ENCODE measurements at regions of chr1 and their contacts with region 1.

Region 1: DNA sequence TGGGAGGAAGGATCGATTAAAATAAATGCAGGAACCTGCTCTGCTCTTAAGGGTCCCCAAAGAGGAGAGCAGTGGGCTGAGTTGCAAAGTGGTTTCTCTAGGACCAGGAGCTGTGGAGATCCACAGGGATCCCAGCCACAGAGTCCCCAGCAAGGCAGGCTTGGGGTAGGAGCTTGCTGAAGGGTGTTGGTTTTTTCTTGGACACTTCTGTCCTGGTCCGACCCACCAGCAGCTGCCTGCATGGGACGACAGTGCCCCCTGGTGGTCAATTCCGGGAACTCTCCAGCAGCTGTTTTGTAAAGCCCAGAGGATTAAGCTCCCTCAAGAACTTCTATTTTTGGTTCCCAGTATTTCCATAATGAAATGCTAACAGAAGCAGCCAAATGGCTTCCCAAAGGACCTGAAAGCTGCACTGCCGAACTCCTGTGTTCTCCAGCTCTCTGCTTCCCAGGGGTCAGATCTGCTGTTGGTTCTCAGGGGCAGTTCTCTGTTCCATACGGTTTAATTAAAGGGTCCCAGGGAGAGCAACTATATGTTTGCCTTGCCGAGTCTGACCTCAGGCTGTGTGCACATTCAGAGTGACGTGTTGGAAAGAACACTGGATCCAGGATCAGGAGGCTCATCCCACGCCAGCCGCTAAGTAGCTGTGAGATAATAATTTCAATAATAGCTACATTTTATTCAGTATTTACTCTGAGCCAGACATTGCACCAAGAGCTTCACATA is 23.2 kb downstream of the NENF start:
- DNase-seq: peak; percentile 33 to 86 (median 72)
- ATAC-seq: peak; percentile 65 to 75 (median 74)
- H3K4me3 ChIP-seq: no peak overlapping the region
- H3K4me3 Mint-ChIP-seq: no peak overlapping the region
- H3K27ac ChIP-seq: no peak overlapping the region
- H3K27ac Mint-ChIP-seq: no peak overlapping the region
- H3K4me1 ChIP-seq: peaks cover 0 to 5% of the 10 kb centered on the region in 2 experiments
- H3K4me1 Mint-ChIP-seq: peaks cover 0 to 4% (median 0%) of the 10 kb centered on the region in 3 donors
- H3K27me3 ChIP-seq: peaks cover 0 to 3% of the 10 kb centered on the region in 2 experiments
- H3K27me3 Mint-ChIP-seq: no peaks in the 10 kb centered on the region

Region 2: DNA sequence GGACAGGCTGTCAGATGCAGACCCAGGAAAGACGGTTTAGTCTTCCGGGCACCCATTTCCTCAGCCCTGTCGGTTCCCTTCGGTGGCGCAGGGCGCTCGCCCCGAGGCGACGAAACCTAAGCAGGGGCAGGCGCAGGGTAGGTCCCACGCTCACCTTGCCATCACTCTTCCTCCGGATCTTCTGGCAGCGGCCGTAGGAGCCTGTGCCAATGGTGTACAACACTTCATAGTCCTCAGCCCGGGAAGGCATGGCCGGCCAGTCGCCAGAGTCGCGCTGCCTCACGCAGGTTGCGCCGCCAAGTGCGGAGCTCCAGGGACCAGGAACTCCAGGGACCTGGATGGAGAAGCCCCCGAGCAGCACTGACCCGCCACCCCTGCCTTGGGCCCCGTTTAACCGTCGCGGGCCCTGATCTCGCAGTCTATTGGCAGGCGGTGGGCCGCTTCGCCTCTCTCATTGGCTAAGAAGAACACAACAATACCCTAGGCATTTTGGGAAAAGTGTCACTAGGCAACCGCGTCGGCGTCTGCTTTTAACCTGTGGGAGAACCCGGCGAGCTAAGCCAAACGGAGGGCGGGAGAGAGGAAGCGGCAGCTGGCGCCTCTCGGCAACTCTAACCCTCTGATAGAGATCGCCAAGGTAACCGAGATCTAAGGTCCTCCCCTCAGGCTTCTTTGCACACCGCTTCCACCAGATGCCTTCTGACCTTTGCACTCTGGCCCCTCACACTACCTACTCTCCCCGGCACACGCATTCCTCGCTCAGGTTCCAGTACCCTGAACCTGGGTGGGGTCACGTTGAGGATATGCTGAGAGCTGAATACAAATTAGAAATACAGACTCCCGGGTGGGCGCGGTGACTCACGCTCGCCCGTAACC is 780.5 kb before region 1 on chr1 and contains the start of gene NEK2:
- CTCF ChIA-PET with region 1: interaction called, 16 to 53 read pairs
- POLR2A ChIA-PET with region 1: interaction called in 1 of 2 experiments, 3 read pairs
- DNase-seq: peak; percentile 59 to 90 (median 80)
- ATAC-seq: peak; percentile 97 to 98 (median 98)
- H3K4me3 ChIP-seq: peak within 1 kb of the TSS; percentile 77 to 86
- H3K4me3 Mint-ChIP-seq: peak within 1 kb of the TSS; percentile 86 to 95 (median 89)
- H3K27ac ChIP-seq: no peak within 1 kb of the TSS
- H3K27ac Mint-ChIP-seq: peak within 1 kb of the TSS; percentile 46 to 66
- H3K4me1 ChIP-seq: peaks cover 8 to 17% of the 10 kb centered on the region in 2 experiments
- H3K4me1 Mint-ChIP-seq: peaks cover 10 to 19% (median 16%) of the 10 kb centered on the region in 3 donors
- H3K27me3 ChIP-seq: no peaks in the 10 kb centered on the region
- H3K27me3 Mint-ChIP-seq: peaks cover 0 to 4% of the 10 kb centered on the region in 2 donors
- total RNA-seq, gene NEK2: 0.16 to 0.63 (median 0.37) TPM

Region 3: DNA sequence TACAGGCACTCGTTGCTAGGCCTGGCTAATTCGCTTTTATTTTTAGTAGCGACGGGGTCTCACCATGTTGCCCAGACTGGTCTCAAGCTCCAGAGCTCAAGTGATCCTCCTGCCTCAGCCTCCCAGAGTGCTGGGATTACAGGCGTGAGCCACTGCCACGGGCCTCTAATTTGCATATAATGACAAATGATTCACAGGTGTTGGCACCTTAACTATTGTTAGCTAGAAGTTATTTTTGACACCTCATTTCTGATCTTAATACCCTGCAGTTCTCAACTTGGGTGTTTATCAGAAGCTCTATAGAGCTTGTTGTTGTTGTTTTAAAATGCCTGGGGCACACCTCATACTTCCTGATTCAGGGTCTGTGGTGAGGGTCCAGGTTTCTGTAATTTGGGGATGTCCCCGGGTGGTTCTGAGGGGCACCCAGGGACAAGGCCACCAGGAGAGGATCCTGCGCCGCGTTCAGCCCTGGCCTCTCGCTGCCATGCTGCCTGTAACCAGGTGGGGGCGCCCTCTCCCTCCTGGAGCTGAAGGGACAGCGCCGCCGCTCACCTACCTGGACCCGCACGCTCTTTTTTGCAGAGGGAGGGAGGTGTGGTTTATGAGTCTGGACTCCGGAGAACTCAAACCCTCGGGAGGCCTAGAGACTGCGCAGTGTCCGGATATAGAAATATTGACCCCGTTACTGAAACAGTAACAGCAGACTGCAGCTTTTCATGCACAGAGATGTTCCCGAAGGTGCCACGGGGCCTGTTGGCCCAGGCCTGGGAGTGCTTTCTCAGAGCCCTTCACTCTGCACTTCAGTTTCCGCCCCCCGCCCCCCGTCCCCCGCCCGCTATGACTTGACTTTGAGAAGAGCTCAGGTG is 757.6 kb before region 1 on chr1:
- CTCF ChIA-PET with region 1: interaction called, 5 to 17 read pairs
- POLR2A ChIA-PET with region 1: no interaction called
- DNase-seq: peak; percentile 44 to 84 (median 75)
- ATAC-seq: peak; percentile 88 to 94 (median 90)
- H3K4me3 ChIP-seq: peak overlapping the region in 1 of 2 donors; percentile 53
- H3K4me3 Mint-ChIP-seq: peak overlapping the region; percentile 56 to 65 (median 58)
- H3K27ac ChIP-seq: no peak overlapping the region
- H3K27ac Mint-ChIP-seq: no peak overlapping the region
- H3K4me1 ChIP-seq: peaks cover 5 to 45% of the 10 kb centered on the region in 2 experiments
- H3K4me1 Mint-ChIP-seq: peaks cover 19 to 50% (median 20%) of the 10 kb centered on the region in 3 donors
- H3K27me3 ChIP-seq: peaks cover 0 to 10% of the 10 kb centered on the region in 2 experiments
- H3K27me3 Mint-ChIP-seq: no peaks in the 10 kb centered on the region

Region 4: DNA sequence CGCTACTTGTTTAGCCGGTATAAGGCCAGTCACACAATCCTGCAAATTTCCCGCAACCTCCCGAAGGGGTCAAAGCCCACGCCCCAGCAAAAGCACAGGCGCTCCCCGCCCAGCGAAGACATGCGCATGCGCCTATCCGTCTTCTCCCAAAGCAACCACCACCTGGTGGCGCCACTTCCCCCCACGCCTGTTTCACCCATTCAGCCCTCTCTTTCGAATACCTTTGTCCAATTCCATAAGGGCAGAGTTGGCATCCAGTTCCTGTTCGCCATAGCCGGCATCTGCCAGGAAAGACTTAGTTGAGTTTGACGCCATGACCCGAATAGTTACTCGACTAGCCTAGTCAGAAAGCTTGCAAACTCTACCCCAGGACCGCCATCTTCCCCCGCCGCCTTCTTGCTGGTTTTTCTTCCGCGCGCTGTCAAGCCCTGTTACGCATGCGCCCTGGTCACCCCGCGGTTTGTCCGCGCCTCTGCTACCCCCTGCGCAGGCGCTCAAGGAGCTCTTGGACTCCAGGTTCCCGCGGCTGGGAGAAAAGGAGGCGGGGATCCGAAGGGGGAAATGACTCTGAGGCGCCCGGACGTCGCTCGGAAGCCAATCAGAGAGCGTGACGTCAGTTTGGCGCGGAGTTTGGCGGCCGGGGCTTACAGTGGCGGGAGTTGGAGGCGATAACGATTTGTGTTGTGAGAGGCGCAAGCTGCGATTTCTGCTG is 420.7 kb before region 1 on chr1 and contains the starts of genes DTL and INTS7:
- CTCF ChIA-PET with region 1: interaction called, 13 to 38 read pairs
- POLR2A ChIA-PET with region 1: no interaction called
- DNase-seq: peak; percentile 94 to 99 (median 97)
- ATAC-seq: peak; percentile 89 to 90 (median 90)
- H3K4me3 ChIP-seq: peak within 1 kb of the TSS; percentile 61 to 98
- H3K4me3 Mint-ChIP-seq: peak within 1 kb of the TSS; percentile 87 to 99 (median 90)
- H3K27ac ChIP-seq: peak within 1 kb of the TSS; percentile 53
- H3K27ac Mint-ChIP-seq: peak within 1 kb of the TSS; percentile 88 to 99
- H3K4me1 ChIP-seq: peaks cover 13 to 18% of the 10 kb centered on the region in 2 experiments
- H3K4me1 Mint-ChIP-seq: peaks cover 57 to 65% (median 59%) of the 10 kb centered on the region in 3 donors
- H3K27me3 ChIP-seq: no peaks in the 10 kb centered on the region
- H3K27me3 Mint-ChIP-seq: peaks cover 0 to 6% of the 10 kb centered on the region in 2 donors
- total RNA-seq, gene DTL: 0.44 to 1.9 (median 1.2) TPM
- total RNA-seq, gene INTS7: 8.5 to 12.2 (median 8.8) TPM

Region 5: DNA sequence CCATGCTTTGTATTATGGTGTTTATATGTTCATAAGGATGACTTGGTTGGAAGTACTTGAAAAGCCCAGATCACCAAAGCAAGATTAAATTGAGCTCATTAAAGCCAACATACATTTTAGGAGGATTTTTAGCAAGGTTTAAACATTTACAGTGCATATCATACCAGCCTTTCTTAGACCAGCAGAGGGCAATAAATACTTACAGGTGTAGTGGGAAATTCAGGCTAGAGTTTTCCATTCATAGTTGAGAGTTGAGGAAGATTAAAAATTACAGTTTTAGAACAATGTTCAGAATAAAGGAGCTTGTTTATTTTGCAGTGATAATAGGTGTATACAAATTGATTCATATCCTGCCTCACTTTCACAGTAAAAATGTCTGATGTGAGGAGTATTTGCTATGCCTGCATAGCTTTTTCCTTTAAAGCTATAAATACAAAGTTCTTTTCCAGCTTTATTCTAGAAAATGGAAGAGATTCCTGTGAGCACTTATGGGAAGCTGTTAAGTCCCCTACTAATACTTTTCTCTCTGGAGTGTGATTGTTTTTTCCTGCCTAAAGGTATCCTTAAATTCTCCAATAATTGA is 385.2 kb before region 1 on chr1:
- CTCF ChIA-PET with region 1: interaction called, 92 to 133 read pairs
- POLR2A ChIA-PET with region 1: no interaction called
- DNase-seq: peak in 1 of 35 experiments; percentile 68
- ATAC-seq: peak; percentile 58 to 75 (median 68)
- H3K4me3 ChIP-seq: no peak overlapping the region
- H3K4me3 Mint-ChIP-seq: no peak overlapping the region
- H3K27ac ChIP-seq: no peak overlapping the region
- H3K27ac Mint-ChIP-seq: no peak overlapping the region
- H3K4me1 ChIP-seq: no peaks in the 10 kb centered on the region
- H3K4me1 Mint-ChIP-seq: no peaks in the 10 kb centered on the region
- H3K27me3 ChIP-seq: no peaks in the 10 kb centered on the region
- H3K27me3 Mint-ChIP-seq: no peaks in the 10 kb centered on the region

Region 6: GRCh38 chr1:212477014-212477679 is 21.2 kb after region 1 on chr1:
- CTCF ChIA-PET with region 1: interaction called, 7 to 11 read pairs
- POLR2A ChIA-PET with region 1: no interaction called
- DNase-seq: peak; percentile 39 to 87 (median 64)
- ATAC-seq: peak; percentile 86 to 97 (median 88)
- H3K4me3 ChIP-seq: no peak overlapping the region
- H3K4me3 Mint-ChIP-seq: no peak overlapping the region
- H3K27ac ChIP-seq: no peak overlapping the region
- H3K27ac Mint-ChIP-seq: no peak overlapping the region
- H3K4me1 ChIP-seq: peaks cover 0 to 17% of the 10 kb centered on the region in 2 experiments
- H3K4me1 Mint-ChIP-seq: peaks cover 6 to 14% (median 9%) of the 10 kb centered on the region in 3 donors
- H3K27me3 ChIP-seq: peaks cover 0 to 12% of the 10 kb centered on the region in 2 experiments
- H3K27me3 Mint-ChIP-seq: peaks cover 6 to 19% of the 10 kb centered on the region in 2 donors